ENCODE measurements at regions of chr10 and their contacts with region 1.

Region 1: GRCh38 chr10:113563306-113564088 is 10.6 kb downstream of the HABP2 start:
- DNase-seq: peak; percentile 15
- H3K4me3 ChIP-seq: peak overlapping the region; percentile 60
- H3K27ac ChIP-seq: no peak overlapping the region
- H3K27me3 ChIP-seq: peaks cover 6% of the 10 kb centered on the region
- CTCF ChIP-seq: peak; percentile 96

Region 2: GRCh38 chr10:113521123-113521795 is 42.2 kb before region 1 on chr10:
- CTCF ChIA-PET with region 1: interaction called, 10 read pairs
- POLR2A ChIA-PET with region 1: no interaction called
- DNase-seq: peak; percentile 45
- H3K4me3 ChIP-seq: no peak overlapping the region
- H3K27ac ChIP-seq: no peak overlapping the region
- H3K27me3 ChIP-seq: no peaks in the 10 kb centered on the region
- CTCF ChIP-seq: peak; percentile 99

Region 3: GRCh38 chr10:113820507-113820906 is 257.0 kb after region 1 on chr10:
- CTCF ChIA-PET with region 1: no interaction called
- POLR2A ChIA-PET with region 1: no interaction called
- DNase-seq: no peak
- H3K4me3 ChIP-seq: no peak overlapping the region
- H3K27ac ChIP-seq: no peak overlapping the region
- H3K27me3 ChIP-seq: peaks cover 2% of the 10 kb centered on the region
- CTCF ChIP-seq: no peak